CD4-positive, alpha-beta memory T cell (primary cell): ENCODE measurements at regions of chr7 and their contacts with region 1.

Region 1: GRCh38 chr7:87416682-87417587 is 58.5 kb downstream of the ABCB4 start:
- DNase-seq: peak; percentile 62 to 72 (median 68)
- H3K4me3 ChIP-seq: no peak overlapping the region
- H3K4me3 Mint-ChIP-seq: no peak overlapping the region
- H3K27ac ChIP-seq: no peak overlapping the region
- H3K27ac Mint-ChIP-seq: no peak overlapping the region
- H3K4me1 ChIP-seq: no peaks in the 10 kb centered on the region
- H3K4me1 Mint-ChIP-seq: peaks cover 0 to 3% (median 0%) of the 10 kb centered on the region in 4 donors
- H3K27me3 ChIP-seq: no peaks in the 10 kb centered on the region
- H3K27me3 Mint-ChIP-seq: peaks cover 2 to 3% of the 10 kb centered on the region in 2 donors

Region 2: GRCh38 chr7:86939197-86939814 is 477.6 kb before region 1 on chr7:
- CTCF ChIA-PET with region 1: no interaction called
- POLR2A ChIA-PET with region 1: no interaction called
- intact Hi-C with region 1: loop called (anchors 1 kb)
- DNase-seq: peak; percentile 40 to 62 (median 52)
- H3K4me3 ChIP-seq: no peak overlapping the region
- H3K4me3 Mint-ChIP-seq: no peak overlapping the region
- H3K27ac ChIP-seq: no peak overlapping the region
- H3K27ac Mint-ChIP-seq: peak overlapping the region in 2 of 7 donors; percentile 75 to 85
- H3K4me1 ChIP-seq: no peaks in the 10 kb centered on the region
- H3K4me1 Mint-ChIP-seq: peaks cover 0 to 4% (median 3%) of the 10 kb centered on the region in 4 donors
- H3K27me3 ChIP-seq: no peaks in the 10 kb centered on the region
- H3K27me3 Mint-ChIP-seq: peaks cover 0 to 2% of the 10 kb centered on the region in 2 donors

Region 3: GRCh38 chr7:87345166-87345927 is 71.6 kb before region 1 on chr7 and contains the start of gene CROT:
- CTCF ChIA-PET with region 1: interaction called, 9 read pairs
- POLR2A ChIA-PET with region 1: interaction called, 5 read pairs
- intact Hi-C with region 1: loop called (anchors 2 kb)
- DNase-seq: peak; percentile 91 to 94 (median 92)
- H3K4me3 ChIP-seq: peak within 1 kb of the TSS; percentile 13 to 73
- H3K4me3 Mint-ChIP-seq: peak within 1 kb of the TSS; percentile 89 to 97 (median 96)
- H3K27ac ChIP-seq: peak within 1 kb of the TSS; percentile 80
- H3K27ac Mint-ChIP-seq: peak within 1 kb of the TSS; percentile 94 to 98 (median 95)
- H3K4me1 ChIP-seq: peaks cover 44% of the 10 kb centered on the region
- H3K4me1 Mint-ChIP-seq: peaks cover 33 to 57% (median 46%) of the 10 kb centered on the region in 4 donors
- H3K27me3 ChIP-seq: no peaks in the 10 kb centered on the region
- H3K27me3 Mint-ChIP-seq: no peaks in the 10 kb centered on the region
- total RNA-seq, gene CROT: 17.8 to 19.0 TPM

Region 4: GRCh38 chr7:87404674-87405073 is 12.3 kb before region 1 on chr7:
- CTCF ChIA-PET with region 1: interaction called, 38 read pairs
- POLR2A ChIA-PET with region 1: interaction called, 3 read pairs
- intact Hi-C with region 1: no loop called
- DNase-seq: no peak
- H3K4me3 ChIP-seq: no peak overlapping the region
- H3K4me3 Mint-ChIP-seq: no peak overlapping the region
- H3K27ac ChIP-seq: no peak overlapping the region
- H3K27ac Mint-ChIP-seq: no peak overlapping the region
- H3K4me1 ChIP-seq: no peaks in the 10 kb centered on the region
- H3K4me1 Mint-ChIP-seq: peaks cover 0 to 1% (median 0%) of the 10 kb centered on the region in 4 donors
- H3K27me3 ChIP-seq: no peaks in the 10 kb centered on the region
- H3K27me3 Mint-ChIP-seq: peaks cover 0 to 3% of the 10 kb centered on the region in 2 donors